ENCODE measurements at regions of chr10 and their contacts with region 1.

Region 1: DNA sequence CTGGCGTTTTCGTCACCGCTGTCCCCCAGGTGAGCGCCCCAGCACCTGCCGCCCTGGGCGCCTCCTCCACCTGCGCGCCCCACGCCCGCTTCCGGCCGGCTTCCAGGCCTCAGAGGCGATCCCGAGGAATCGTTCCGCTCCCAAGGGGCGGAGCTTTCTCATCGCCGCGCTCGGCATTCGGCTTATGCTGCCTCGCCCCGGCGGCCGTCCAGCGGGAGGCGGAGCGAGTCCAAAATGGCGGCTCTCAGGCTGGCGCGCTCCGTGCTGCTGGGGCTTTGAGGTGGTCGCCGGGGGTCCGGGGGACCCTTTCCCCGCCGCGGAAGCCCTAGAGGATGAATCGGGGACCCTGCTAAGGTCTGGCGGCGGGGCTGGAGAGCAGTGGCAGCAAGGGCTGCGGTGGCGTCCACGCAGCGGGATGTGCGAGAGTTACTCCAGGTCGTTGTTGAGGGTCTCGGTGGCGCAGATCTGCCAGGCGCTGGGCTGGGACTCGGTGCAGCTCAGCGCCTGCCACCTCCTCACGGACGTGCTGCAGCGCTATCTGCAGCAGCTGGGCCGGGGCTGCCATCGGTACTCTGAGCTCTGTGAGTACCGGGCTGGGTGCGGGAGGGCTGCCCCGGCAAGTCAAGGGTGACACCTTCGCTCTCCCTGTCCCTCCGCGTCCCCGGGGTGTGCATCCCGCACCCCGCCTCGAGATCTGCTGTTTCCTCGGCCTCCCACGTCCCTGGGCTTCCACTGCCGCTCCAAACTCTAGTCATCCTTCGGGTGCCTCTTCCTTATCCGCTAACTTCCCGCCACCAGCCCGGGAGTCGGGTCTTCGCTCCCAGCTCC is at the start of gene TAF3:
- DNase-seq: peak; percentile 94
- H3K4me3 Mint-ChIP-seq: peak within 1 kb of the TSS; percentile 97
- H3K27ac Mint-ChIP-seq: peak within 1 kb of the TSS; percentile 82
- H3K4me1 Mint-ChIP-seq: peaks cover 30% of the 10 kb centered on the region
- H3K27me3 Mint-ChIP-seq: peaks cover 3% of the 10 kb centered on the region
- total RNA-seq, gene TAF3: 12.7 to 13.0 TPM

Region 2: DNA sequence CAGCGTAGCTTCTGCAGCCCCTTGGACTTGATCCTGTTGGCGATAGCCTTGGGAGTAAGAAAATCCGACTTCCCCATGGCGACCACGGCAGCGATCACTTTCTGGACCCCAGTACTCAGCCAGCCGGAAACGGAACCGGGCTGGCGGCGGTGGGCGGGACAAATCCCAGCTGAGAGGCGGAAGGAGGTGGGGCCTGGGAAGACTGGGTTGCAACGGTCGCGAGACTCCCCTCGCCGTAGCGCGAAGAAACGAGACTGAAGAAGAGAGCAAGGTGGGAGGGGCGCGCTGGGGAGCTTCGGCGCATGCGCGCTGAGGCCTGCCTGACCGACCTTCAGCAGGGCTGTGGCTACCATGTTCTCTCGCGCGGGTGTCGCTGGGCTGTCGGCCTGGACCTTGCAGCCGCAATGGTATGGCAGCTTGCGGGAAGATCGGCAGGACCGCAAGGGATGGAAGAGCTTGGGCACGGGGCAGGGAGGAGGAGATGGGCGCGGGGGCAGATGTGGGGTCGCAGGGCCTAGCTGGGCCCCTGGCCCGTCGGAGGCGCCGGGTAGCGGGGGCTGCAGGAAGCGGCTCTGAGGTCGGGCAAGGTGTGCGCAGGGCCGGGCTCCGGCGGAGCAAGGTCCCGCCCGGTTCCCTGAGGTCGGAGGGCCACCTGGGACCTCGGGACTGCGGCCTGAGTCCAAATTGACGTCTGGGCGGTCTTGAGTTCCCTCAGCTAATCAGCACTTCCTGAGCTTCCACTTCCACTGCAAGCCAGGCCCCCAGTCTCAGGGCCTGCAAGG is 30.5 kb before region 1 on chr10 and contains the starts of genes ATP5F1C and KIN:
- CTCF ChIA-PET with region 1: interaction called, 12 read pairs
- POLR2A ChIA-PET with region 1: interaction called, 86 read pairs
- DNase-seq: peak; percentile 98
- H3K4me3 Mint-ChIP-seq: no peak within 1 kb of the TSS
- H3K27ac Mint-ChIP-seq: no peak within 1 kb of the TSS
- H3K4me1 Mint-ChIP-seq: peaks cover 53% of the 10 kb centered on the region
- H3K27me3 Mint-ChIP-seq: no peaks in the 10 kb centered on the region
- total RNA-seq, gene ATP5F1C: 273 to 278 TPM
- total RNA-seq, gene KIN: 13.8 to 15.8 TPM

Region 3: GRCh38 chr10:7797582-7797981 is 20.9 kb before region 1 on chr10:
- CTCF ChIA-PET with region 1: interaction called, 3 read pairs
- POLR2A ChIA-PET with region 1: interaction called, 10 read pairs
- DNase-seq: no peak
- H3K4me3 Mint-ChIP-seq: no peak overlapping the region
- H3K27ac Mint-ChIP-seq: no peak overlapping the region
- H3K4me1 Mint-ChIP-seq: peaks cover 37% of the 10 kb centered on the region
- H3K27me3 Mint-ChIP-seq: no peaks in the 10 kb centered on the region

Measured in activated CD4-positive, alpha-beta memory T cell treated with anti-CD3 and anti-CD28 coated beads, Interleukin-2, amount 10 ng/mL, durations not matched to agents 7 days and 5 days (primary cell).